ENCODE measurements at regions of chr11 and their contacts with region 1.

Region 1: GRCh38 chr11:62427630-62428233 is 8.9 kb downstream of the SCGB1A1 start:
- DNase-seq: peak; percentile 48
- H3K4me3 Mint-ChIP-seq: peak overlapping the region; percentile 41
- H3K27ac Mint-ChIP-seq: peak overlapping the region; percentile 91
- H3K4me1 Mint-ChIP-seq: peaks cover 68% of the 10 kb centered on the region
- H3K27me3 Mint-ChIP-seq: peaks cover 1% of the 10 kb centered on the region

Region 2: GRCh38 chr11:62394825-62395538 is 32.8 kb before region 1 on chr11:
- CTCF ChIA-PET with region 1: interaction called, 37 read pairs
- POLR2A ChIA-PET with region 1: no interaction called
- DNase-seq: peak; percentile 56
- H3K4me3 Mint-ChIP-seq: no peak overlapping the region
- H3K27ac Mint-ChIP-seq: no peak overlapping the region
- H3K4me1 Mint-ChIP-seq: peaks cover 4% of the 10 kb centered on the region
- H3K27me3 Mint-ChIP-seq: peaks cover 15% of the 10 kb centered on the region

Region 3: GRCh38 chr11:62444236-62444833 is 16.6 kb after region 1 on chr11:
- CTCF ChIA-PET with region 1: interaction called, 18 read pairs
- POLR2A ChIA-PET with region 1: interaction called, 4 read pairs
- DNase-seq: peak; percentile 34
- H3K4me3 Mint-ChIP-seq: peak overlapping the region; percentile 62
- H3K27ac Mint-ChIP-seq: no peak overlapping the region
- H3K4me1 Mint-ChIP-seq: peaks cover 5% of the 10 kb centered on the region
- H3K27me3 Mint-ChIP-seq: peaks cover 23% of the 10 kb centered on the region

Region 4: DNA sequence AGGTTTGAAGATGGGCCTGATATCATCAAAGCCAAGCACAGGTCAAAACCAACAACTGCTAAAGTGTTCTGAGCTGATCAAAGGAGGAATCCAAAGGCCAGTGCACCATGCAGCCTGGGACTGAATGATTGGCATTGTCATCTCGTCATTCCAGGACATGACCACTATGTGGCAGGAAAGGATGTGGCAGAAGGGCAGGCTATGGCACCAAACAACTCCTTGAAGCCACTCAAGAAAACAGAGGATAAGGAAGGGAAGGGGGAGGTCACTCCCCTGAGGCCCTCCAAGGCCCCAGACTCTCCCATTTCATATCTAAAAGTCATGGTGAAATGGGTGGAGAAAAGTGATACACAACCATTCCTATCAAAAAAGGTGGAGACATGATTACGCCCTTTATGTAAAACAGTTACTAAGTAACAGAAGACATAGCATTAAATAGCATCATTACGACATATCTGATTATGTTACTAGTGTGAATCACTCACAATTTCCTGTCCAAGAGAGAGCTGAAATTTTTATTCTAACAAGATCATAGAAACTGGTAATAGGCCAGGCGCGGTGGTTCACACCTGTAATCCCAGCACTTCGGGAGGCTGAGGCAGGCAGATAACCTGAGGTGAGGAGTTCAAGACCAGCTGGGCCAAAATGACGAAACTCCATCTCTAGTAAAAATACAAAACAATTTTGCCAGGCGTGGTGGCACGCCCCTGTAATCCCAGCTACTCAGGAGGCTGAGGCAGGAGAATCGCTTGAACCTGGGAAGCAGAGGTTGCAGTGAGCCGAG is 69.6 kb after region 1 on chr11:
- CTCF ChIA-PET with region 1: interaction called, 13 read pairs
- POLR2A ChIA-PET with region 1: no interaction called
- DNase-seq: peak; percentile 21
- H3K4me3 Mint-ChIP-seq: no peak overlapping the region
- H3K27ac Mint-ChIP-seq: no peak overlapping the region
- H3K4me1 Mint-ChIP-seq: peaks cover 16% of the 10 kb centered on the region
- H3K27me3 Mint-ChIP-seq: peaks cover 2% of the 10 kb centered on the region

Region 5: DNA sequence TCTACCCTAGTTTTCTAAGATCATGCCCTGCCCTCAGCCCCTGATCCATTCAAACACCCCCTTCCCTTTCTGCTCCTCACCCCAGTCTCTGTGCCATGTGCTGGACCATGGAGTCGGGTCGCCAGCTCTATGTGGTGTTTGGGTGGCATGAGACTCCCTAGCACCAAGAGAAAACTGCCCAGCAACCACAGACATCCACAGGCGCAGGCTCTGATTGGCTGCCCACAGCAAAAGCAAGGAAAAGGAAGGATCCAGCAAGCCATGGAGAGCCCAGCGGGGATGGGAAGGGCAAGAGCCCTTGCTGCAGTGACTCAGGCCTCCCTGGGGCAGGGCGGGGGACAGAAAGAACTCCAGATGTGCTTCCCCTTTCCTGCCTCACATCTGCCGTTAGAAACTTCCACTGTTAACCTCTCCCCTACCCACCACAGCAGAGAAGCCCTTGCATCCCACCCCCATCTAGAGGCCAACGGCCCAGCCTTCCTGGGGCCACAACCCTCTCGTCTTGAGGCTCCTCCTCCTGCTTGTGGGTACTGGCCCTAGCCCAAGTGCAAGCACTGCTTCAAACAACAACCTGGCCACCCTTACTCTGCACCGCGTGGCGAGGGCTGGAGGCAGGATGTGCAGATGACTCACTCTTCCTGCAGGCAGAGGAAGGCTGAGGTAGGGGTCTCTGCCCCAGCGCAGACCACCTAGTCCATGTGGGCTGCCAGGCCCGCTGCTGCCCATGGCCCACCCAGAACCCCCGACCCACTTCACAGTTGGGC is 128.6 kb after region 1 on chr11:
- CTCF ChIA-PET with region 1: interaction called, 228 read pairs
- POLR2A ChIA-PET with region 1: interaction called, 36 read pairs
- DNase-seq: peak; percentile 94
- H3K4me3 Mint-ChIP-seq: peak overlapping the region; percentile 74
- H3K27ac Mint-ChIP-seq: peak overlapping the region; percentile 99
- H3K4me1 Mint-ChIP-seq: peaks cover 99% of the 10 kb centered on the region
- H3K27me3 Mint-ChIP-seq: no peaks in the 10 kb centered on the region

Region 6: GRCh38 chr11:62601394-62602140 is 173.8 kb after region 1 on chr11 and contains the start of gene MTA2:
- CTCF ChIA-PET with region 1: interaction called, 12 read pairs
- POLR2A ChIA-PET with region 1: interaction called, 4 read pairs
- DNase-seq: peak; percentile 100
- H3K4me3 Mint-ChIP-seq: peak within 1 kb of the TSS; percentile 85
- H3K27ac Mint-ChIP-seq: peak within 1 kb of the TSS; percentile 88
- H3K4me1 Mint-ChIP-seq: peaks cover 53% of the 10 kb centered on the region
- H3K27me3 Mint-ChIP-seq: no peaks in the 10 kb centered on the region
- total RNA-seq, gene MTA2: 226 TPM

Measured in activated CD4-positive, alpha-beta memory T cell treated with anti-CD3 and anti-CD28 coated beads, Interleukin-2, amount 10 ng/mL, durations not matched to agents 7 days and 5 days (primary cell).